ENCODE measurements at regions of chr7 and their contacts with region 1.

Region 1: GRCh38 chr7:2720582-2721491 is 32.8 kb downstream of the AMZ1 start:
- DNase-seq: peak in 1 of 9 donors; percentile 71
- ATAC-seq: peak; percentile 55
- H3K4me3 ChIP-seq: no peak overlapping the region
- H3K4me3 Mint-ChIP-seq: peak overlapping the region in 1 of 10 donors; percentile 41
- H3K27ac ChIP-seq: no peak overlapping the region
- H3K27ac Mint-ChIP-seq: peak overlapping the region in 3 of 9 donors; percentile 70 to 86 (median 73)
- H3K4me1 ChIP-seq: peaks cover 9 to 30% of the 10 kb centered on the region in 2 donors
- H3K4me1 Mint-ChIP-seq: peaks cover 21 to 47% (median 40%) of the 10 kb centered on the region in 7 donors
- H3K27me3 ChIP-seq: no peaks in the 10 kb centered on the region
- H3K27me3 Mint-ChIP-seq: no peaks in the 10 kb centered on the region

Region 2: GRCh38 chr7:2670720-2671391 is 50.0 kb before region 1 on chr7:
- CTCF ChIA-PET with region 1: interaction called, 5 read pairs
- POLR2A ChIA-PET with region 1: interaction called, 5 read pairs
- intact Hi-C with region 1: loop called in 1 of 2 experiments (anchors 2 kb)
- DNase-seq: peak; percentile 30 to 70 (median 59)
- ATAC-seq: peak; percentile 83
- H3K4me3 ChIP-seq: no peak overlapping the region
- H3K4me3 Mint-ChIP-seq: peak overlapping the region in 1 of 10 donors; percentile 49
- H3K27ac ChIP-seq: no peak overlapping the region
- H3K27ac Mint-ChIP-seq: peak overlapping the region in 3 of 9 donors; percentile 26 to 47 (median 34)
- H3K4me1 ChIP-seq: peaks cover 6% of the 10 kb centered on the region in 2 donors
- H3K4me1 Mint-ChIP-seq: peaks cover 0 to 13% (median 4%) of the 10 kb centered on the region in 7 donors
- H3K27me3 ChIP-seq: no peaks in the 10 kb centered on the region
- H3K27me3 Mint-ChIP-seq: peaks cover 0 to 35% (median 4%) of the 10 kb centered on the region in 5 donors

Region 3: GRCh38 chr7:2698581-2699288 is 22.1 kb before region 1 on chr7:
- CTCF ChIA-PET with region 1: interaction called, 3 read pairs
- POLR2A ChIA-PET with region 1: interaction called, 6 read pairs
- intact Hi-C with region 1: loop called in 1 of 2 experiments (anchors 2 kb)
- DNase-seq: peak in 8 of 9 donors; percentile 24 to 61 (median 59)
- ATAC-seq: peak; percentile 90
- H3K4me3 ChIP-seq: peak overlapping the region; percentile 46
- H3K4me3 Mint-ChIP-seq: peak overlapping the region; percentile 46 to 88 (median 80)
- H3K27ac ChIP-seq: no peak overlapping the region
- H3K27ac Mint-ChIP-seq: peak overlapping the region in 8 of 9 donors; percentile 0 to 89 (median 76)
- H3K4me1 ChIP-seq: peaks cover 15 to 16% of the 10 kb centered on the region in 2 donors
- H3K4me1 Mint-ChIP-seq: peaks cover 16 to 29% (median 24%) of the 10 kb centered on the region in 7 donors
- H3K27me3 ChIP-seq: no peaks in the 10 kb centered on the region
- H3K27me3 Mint-ChIP-seq: peaks cover 0 to 20% (median 0%) of the 10 kb centered on the region in 5 donors

Region 4: GRCh38 chr7:2844165-2844898 is 123.5 kb after region 1 on chr7 and contains the start of gene GNA12:
- CTCF ChIA-PET with region 1: no interaction called
- POLR2A ChIA-PET with region 1: no interaction called
- intact Hi-C with region 1: loop called in 1 of 2 experiments (anchors 5 kb)
- DNase-seq: peak; percentile 94 to 98 (median 98)
- ATAC-seq: peak; percentile 97
- H3K4me3 ChIP-seq: peak within 1 kb of the TSS; percentile 70
- H3K4me3 Mint-ChIP-seq: peak within 1 kb of the TSS; percentile 86 to 98 (median 91)
- H3K27ac ChIP-seq: peak within 1 kb of the TSS; percentile 59
- H3K27ac Mint-ChIP-seq: peak within 1 kb of the TSS; percentile 2 to 89 (median 78)
- H3K4me1 ChIP-seq: peaks cover 12% of the 10 kb centered on the region in 2 donors
- H3K4me1 Mint-ChIP-seq: peaks cover 19 to 49% (median 44%) of the 10 kb centered on the region in 7 donors
- H3K27me3 ChIP-seq: no peaks in the 10 kb centered on the region
- H3K27me3 Mint-ChIP-seq: no peaks in the 10 kb centered on the region
- total RNA-seq, gene GNA12: 18.1 to 25.7 (median 21.0) TPM

Region 5: DNA sequence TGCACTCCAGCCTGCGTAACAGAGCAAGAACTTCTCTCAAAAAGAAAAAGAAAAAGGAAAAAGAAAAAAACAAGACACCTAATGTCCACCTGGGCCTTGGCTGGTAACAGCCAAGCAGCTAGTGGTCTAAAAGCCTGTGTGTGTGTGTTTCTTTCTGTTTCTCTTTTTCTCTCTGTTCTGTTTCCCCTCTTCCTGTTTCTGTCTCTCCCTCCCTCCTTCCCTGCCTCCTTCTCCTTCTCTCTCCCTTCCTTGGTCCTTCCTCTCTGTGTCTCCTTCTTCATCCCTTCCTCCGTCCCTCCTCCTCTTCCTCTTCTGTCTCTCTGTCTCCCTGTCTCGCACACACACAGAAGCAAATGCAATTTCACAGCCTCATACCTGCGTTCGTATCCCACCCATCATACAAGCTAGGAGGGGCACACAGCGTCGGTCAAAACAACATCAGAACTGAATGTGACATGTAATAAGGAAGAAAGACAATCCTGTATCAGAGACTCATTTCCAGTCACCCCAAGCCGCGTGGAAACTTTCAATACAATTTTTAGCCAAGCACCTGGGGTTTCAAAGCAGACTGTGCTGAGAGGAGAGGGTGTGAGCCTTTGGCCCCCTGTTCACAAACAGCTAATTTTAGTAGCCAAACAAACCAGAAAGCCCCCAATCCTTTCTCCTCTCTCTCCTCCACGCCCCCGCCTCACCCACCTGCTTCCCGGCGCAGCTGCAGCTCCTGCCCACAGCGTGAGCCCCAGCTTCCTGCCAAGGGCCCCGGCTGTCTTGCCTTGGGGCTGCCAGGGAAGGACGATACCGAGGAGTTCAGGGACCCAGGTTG is 173.5 kb after region 1 on chr7:
- CTCF ChIA-PET with region 1: no interaction called
- POLR2A ChIA-PET with region 1: no interaction called
- intact Hi-C with region 1: no loop called
- DNase-seq: peak in 7 of 9 donors; percentile 30 to 74 (median 41)
- ATAC-seq: peak; percentile 72
- H3K4me3 ChIP-seq: peak overlapping the region; percentile 54
- H3K4me3 Mint-ChIP-seq: peak overlapping the region; percentile 75 to 93 (median 82)
- H3K27ac ChIP-seq: peak overlapping the region; percentile 42
- H3K27ac Mint-ChIP-seq: peak overlapping the region; percentile 0 to 92 (median 70)
- H3K4me1 ChIP-seq: peaks cover 10 to 11% of the 10 kb centered on the region in 2 donors
- H3K4me1 Mint-ChIP-seq: peaks cover 9 to 29% (median 21%) of the 10 kb centered on the region in 7 donors
- H3K27me3 ChIP-seq: no peaks in the 10 kb centered on the region
- H3K27me3 Mint-ChIP-seq: no peaks in the 10 kb centered on the region

Measured in naive thymus-derived CD4-positive, alpha-beta T cell (primary cell).